H1 (cell line): ENCODE measurements at regions of chr7 and their contacts with region 1.

Region 1: GRCh38 chr7:37234928-37235327 is 213.7 kb downstream of the ELMO1 start:
- DNase-seq: no peak
- H3K4me3 ChIP-seq: no peak overlapping the region
- H3K27ac ChIP-seq: no peak overlapping the region
- H3K4me1 ChIP-seq: peaks cover 0 to 3% (median 1%) of the 10 kb centered on the region in 4 experiments; a peak in 2 of 7 replicates
- H3K27me3 ChIP-seq: no peaks in the 10 kb centered on the region
- CTCF ChIP-seq: peak in 2 of 3 experiments; percentile 64 to 73; a peak in 3 of 4 replicates
- EP300 ChIP-seq: no peak
- POLR2A ChIP-seq: no peak
- RAD21 ChIP-seq: peak; percentile 90 to 92

Region 2: DNA sequence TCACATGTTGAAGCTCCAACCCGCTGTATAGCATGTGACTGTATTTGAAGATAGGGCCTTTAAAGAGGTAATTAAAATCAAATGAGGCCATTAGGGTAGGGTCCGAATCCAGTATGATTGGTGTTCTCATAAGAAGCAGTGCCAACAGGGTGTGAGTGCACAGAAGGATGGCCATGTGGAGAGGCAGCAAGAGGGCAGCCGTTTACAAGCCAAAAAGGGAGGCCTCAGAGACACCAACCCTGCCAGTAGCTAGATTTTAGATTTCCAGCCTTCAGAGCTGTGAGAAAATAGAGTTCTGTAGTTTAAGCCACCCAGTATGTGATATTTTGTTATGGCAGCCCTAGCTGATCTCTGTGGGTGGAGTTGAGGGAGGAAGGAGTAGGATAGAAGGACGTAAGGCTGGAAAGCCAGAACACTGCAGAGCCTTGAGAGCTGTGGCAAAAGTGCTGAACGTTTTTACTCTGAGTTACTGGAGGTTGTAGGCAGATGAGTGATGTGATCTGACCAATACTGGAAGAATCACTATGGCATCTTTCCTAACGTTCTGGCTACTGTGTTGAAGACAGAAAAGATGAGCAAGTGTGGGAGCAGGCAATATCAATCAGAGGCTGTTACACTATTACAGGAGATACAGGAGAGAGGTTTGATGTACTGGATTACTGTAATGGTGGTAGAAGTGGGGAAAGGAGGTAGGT is 121.1 kb before region 1 on chr7:
- CTCF ChIA-PET with region 1: no interaction called
- POLR2A ChIA-PET with region 1: no interaction called
- DNase-seq: no peak
- H3K4me3 ChIP-seq: no peak overlapping the region
- H3K27ac ChIP-seq: no peak overlapping the region
- H3K4me1 ChIP-seq: peaks cover 0 to 15% (median 2%) of the 10 kb centered on the region in 4 experiments; a peak in 3 of 7 replicates
- H3K27me3 ChIP-seq: no peaks in the 10 kb centered on the region
- CTCF ChIP-seq: no peak
- EP300 ChIP-seq: no peak
- POLR2A ChIP-seq: no peak
- RAD21 ChIP-seq: no peak

Region 3: GRCh38 chr7:37129035-37129425 is 105.9 kb before region 1 on chr7:
- CTCF ChIA-PET with region 1: no interaction called
- POLR2A ChIA-PET with region 1: no interaction called
- DNase-seq: no peak
- H3K4me3 ChIP-seq: no peak overlapping the region
- H3K27ac ChIP-seq: no peak overlapping the region
- H3K4me1 ChIP-seq: no peaks in the 10 kb centered on the region
- H3K27me3 ChIP-seq: no peaks in the 10 kb centered on the region
- CTCF ChIP-seq: no peak
- EP300 ChIP-seq: no peak
- POLR2A ChIP-seq: no peak
- RAD21 ChIP-seq: no peak

Region 4: GRCh38 chr7:37247861-37248260 is 12.9 kb after region 1 on chr7:
- CTCF ChIA-PET with region 1: interaction called, 21 read pairs
- POLR2A ChIA-PET with region 1: interaction called, 20 read pairs
- DNase-seq: no peak
- H3K4me3 ChIP-seq: peak overlapping the region in 2 of 4 experiments; percentile 4 to 40; a peak in 3 of 8 replicates
- H3K27ac ChIP-seq: peak overlapping the region; percentile 93
- H3K4me1 ChIP-seq: peaks cover 10 to 20% (median 12%) of the 10 kb centered on the region in 4 experiments; a peak in 6 of 7 replicates
- H3K27me3 ChIP-seq: no peaks in the 10 kb centered on the region
- CTCF ChIP-seq: no peak
- EP300 ChIP-seq: no peak
- POLR2A ChIP-seq: no peak
- RAD21 ChIP-seq: no peak

Region 5: GRCh38 chr7:37269711-37270508 is 35.0 kb after region 1 on chr7:
- CTCF ChIA-PET with region 1: interaction called, 18 read pairs
- POLR2A ChIA-PET with region 1: no interaction called
- DNase-seq: no peak
- H3K4me3 ChIP-seq: no peak overlapping the region
- H3K27ac ChIP-seq: no peak overlapping the region
- H3K4me1 ChIP-seq: no peaks in the 10 kb centered on the region
- H3K27me3 ChIP-seq: no peaks in the 10 kb centered on the region
- CTCF ChIP-seq: no peak
- EP300 ChIP-seq: no peak
- POLR2A ChIP-seq: no peak
- RAD21 ChIP-seq: no peak

Region 6: DNA sequence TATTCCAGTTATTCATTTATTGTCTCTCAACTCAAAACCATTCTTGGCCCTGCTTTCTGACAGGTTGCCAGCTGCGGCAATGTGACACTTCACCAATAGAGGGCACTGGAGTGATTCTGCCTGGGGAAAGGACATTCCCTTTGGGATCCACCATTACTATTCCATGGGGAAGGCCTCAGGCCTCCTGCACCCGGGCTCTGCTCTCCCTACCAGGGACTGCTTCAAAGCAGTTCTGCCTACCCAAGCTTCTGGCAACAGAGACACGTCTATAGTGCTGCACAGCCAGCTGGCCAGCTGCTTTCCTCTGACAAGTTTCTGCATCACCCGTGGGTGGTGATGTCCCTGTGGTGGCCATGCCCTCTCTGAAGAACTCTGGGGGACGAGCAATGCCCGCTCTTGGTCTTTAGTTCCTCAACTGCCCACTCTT is 49.9 kb after region 1 on chr7:
- CTCF ChIA-PET with region 1: interaction called, 21 read pairs
- POLR2A ChIA-PET with region 1: interaction called, 3 read pairs
- DNase-seq: peak; percentile 23 to 85
- H3K4me3 ChIP-seq: no peak overlapping the region
- H3K27ac ChIP-seq: no peak overlapping the region
- H3K4me1 ChIP-seq: peaks cover 0 to 16% (median 3%) of the 10 kb centered on the region in 4 experiments; a peak in 5 of 7 replicates
- H3K27me3 ChIP-seq: no peaks in the 10 kb centered on the region
- CTCF ChIP-seq: peak; percentile 80 to 90 (median 86)
- EP300 ChIP-seq: no peak; a peak in 1 of 3 replicates
- POLR2A ChIP-seq: no peak
- RAD21 ChIP-seq: peak; percentile 91 to 92

Region 7: GRCh38 chr7:37448636-37449361 is 213.9 kb after region 1 on chr7 and contains the start of gene ELMO1:
- CTCF ChIA-PET with region 1: interaction called, 13 read pairs
- POLR2A ChIA-PET with region 1: no interaction called
- DNase-seq: peak; percentile 70 to 81
- H3K4me3 ChIP-seq: peak within 1 kb of the TSS; percentile 70 to 93 (median 74)
- H3K27ac ChIP-seq: no peak within 1 kb of the TSS
- H3K4me1 ChIP-seq: peaks cover 0 to 15% (median 3%) of the 10 kb centered on the region in 4 experiments; a peak in 4 of 7 replicates
- H3K27me3 ChIP-seq: no peaks in the 10 kb centered on the region; a peak in 2 of 7 replicates
- CTCF ChIP-seq: peak; percentile 59 to 60 (median 59)
- EP300 ChIP-seq: no peak
- POLR2A ChIP-seq: peak in 1 of 2 experiments; percentile 75; a peak in 2 of 3 replicates
- RAD21 ChIP-seq: peak; percentile 42 to 57
- total RNA-seq, gene ELMO1: 18.4 and 20.6 TPM in 2 replicates

Region 8: GRCh38 chr7:37510043-37510634 is 275.2 kb after region 1 on chr7:
- CTCF ChIA-PET with region 1: interaction called, 86 read pairs
- POLR2A ChIA-PET with region 1: no interaction called
- DNase-seq: no peak
- H3K4me3 ChIP-seq: no peak overlapping the region
- H3K27ac ChIP-seq: no peak overlapping the region
- H3K4me1 ChIP-seq: no peaks in the 10 kb centered on the region; a peak in 1 of 7 replicates
- H3K27me3 ChIP-seq: no peaks in the 10 kb centered on the region
- CTCF ChIP-seq: peak; percentile 36 to 77 (median 66)
- EP300 ChIP-seq: no peak
- POLR2A ChIP-seq: no peak
- RAD21 ChIP-seq: peak; percentile 74 to 77